CD8-positive, alpha-beta memory T cell (primary cell): ENCODE measurements at regions of chr18 and their contacts with region 1.

Region 1: DNA sequence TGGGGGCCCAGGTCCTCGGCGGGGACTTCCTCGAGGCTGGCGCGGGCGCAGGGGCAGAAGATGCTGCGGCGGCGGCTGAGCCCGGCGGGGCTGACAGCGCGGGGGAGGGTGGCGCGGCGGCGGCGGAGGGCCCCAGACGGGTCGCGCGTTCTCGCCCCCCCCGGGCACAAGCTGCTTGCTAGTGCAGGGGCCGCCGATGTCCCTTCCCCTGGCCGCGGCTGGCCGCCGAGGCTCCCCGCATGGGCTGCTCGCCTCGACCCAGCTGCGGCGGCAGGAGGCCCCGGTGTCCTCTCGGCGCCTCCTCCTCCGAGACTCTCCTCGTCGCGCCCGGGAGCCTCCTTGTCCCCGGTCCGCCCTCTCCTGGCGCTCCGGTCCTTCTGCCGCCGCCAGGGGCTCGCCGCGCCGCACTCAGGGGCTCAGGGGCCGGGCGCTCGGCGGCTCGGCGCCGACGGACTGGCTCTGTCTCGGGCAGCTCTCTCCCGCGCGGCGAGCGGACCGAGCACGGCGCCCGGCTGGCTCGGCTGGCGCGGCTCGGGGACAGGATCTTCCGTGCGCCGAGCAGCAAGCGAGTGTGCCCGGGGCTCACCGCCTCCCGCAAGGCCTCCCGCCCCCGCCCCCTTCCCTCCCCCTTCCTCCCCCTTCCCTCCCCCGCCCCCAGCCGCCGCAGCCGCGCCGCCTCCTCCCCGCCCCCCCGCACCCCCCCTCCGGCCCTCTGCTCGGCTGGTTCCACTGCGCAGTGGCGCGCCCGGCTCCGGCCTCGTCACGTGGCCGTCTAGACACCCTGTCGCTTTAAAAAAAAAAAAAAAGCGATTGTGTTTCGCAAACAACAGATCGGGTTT is 902 bp upstream of the SMAD7 start:
- DNase-seq: peak; percentile 71 to 92 (median 77)
- H3K4me3 ChIP-seq: peak overlapping the region; percentile 75
- H3K4me3 Mint-ChIP-seq: peak overlapping the region; percentile 91 to 99 (median 96)
- H3K27ac ChIP-seq: peak overlapping the region; percentile 92
- H3K27ac Mint-ChIP-seq: peak overlapping the region; percentile 98 to 100 (median 99)
- H3K4me1 ChIP-seq: peaks cover 32% of the 10 kb centered on the region
- H3K4me1 Mint-ChIP-seq: peaks cover 45 to 54% (median 53%) of the 10 kb centered on the region in 3 donors
- H3K27me3 ChIP-seq: no peaks in the 10 kb centered on the region
- H3K27me3 Mint-ChIP-seq: peaks cover 0 to 2% of the 10 kb centered on the region in 2 donors

Region 2: GRCh38 chr18:48813833-48814489 is 137.7 kb before region 1 on chr18:
- CTCF ChIA-PET with region 1: interaction called, 3 read pairs
- POLR2A ChIA-PET with region 1: interaction called, 10 read pairs
- DNase-seq: peak in 4 of 5 donors; percentile 45 to 90 (median 71)
- H3K4me3 ChIP-seq: peak overlapping the region; percentile 19
- H3K4me3 Mint-ChIP-seq: peak overlapping the region; percentile 18 to 78 (median 60)
- H3K27ac ChIP-seq: peak overlapping the region; percentile 98
- H3K27ac Mint-ChIP-seq: peak overlapping the region; percentile 90 to 99 (median 97)
- H3K4me1 ChIP-seq: peaks cover 34% of the 10 kb centered on the region
- H3K4me1 Mint-ChIP-seq: peaks cover 55 to 72% (median 60%) of the 10 kb centered on the region in 3 donors
- H3K27me3 ChIP-seq: no peaks in the 10 kb centered on the region
- H3K27me3 Mint-ChIP-seq: no peaks in the 10 kb centered on the region

Region 3: GRCh38 chr18:48928787-48929186 is 22.9 kb before region 1 on chr18:
- CTCF ChIA-PET with region 1: interaction called, 6 read pairs
- POLR2A ChIA-PET with region 1: interaction called, 15 read pairs
- DNase-seq: peak; percentile 70 to 90 (median 75)
- H3K4me3 ChIP-seq: peak overlapping the region; percentile 21
- H3K4me3 Mint-ChIP-seq: peak overlapping the region; percentile 31 to 90 (median 78)
- H3K27ac ChIP-seq: no peak overlapping the region
- H3K27ac Mint-ChIP-seq: peak overlapping the region; percentile 78 to 99 (median 96)
- H3K4me1 ChIP-seq: peaks cover 81% of the 10 kb centered on the region
- H3K4me1 Mint-ChIP-seq: peaks cover 86 to 98% (median 89%) of the 10 kb centered on the region in 3 donors
- H3K27me3 ChIP-seq: no peaks in the 10 kb centered on the region
- H3K27me3 Mint-ChIP-seq: peaks cover 0 to 7% of the 10 kb centered on the region in 2 donors

Region 4: DNA sequence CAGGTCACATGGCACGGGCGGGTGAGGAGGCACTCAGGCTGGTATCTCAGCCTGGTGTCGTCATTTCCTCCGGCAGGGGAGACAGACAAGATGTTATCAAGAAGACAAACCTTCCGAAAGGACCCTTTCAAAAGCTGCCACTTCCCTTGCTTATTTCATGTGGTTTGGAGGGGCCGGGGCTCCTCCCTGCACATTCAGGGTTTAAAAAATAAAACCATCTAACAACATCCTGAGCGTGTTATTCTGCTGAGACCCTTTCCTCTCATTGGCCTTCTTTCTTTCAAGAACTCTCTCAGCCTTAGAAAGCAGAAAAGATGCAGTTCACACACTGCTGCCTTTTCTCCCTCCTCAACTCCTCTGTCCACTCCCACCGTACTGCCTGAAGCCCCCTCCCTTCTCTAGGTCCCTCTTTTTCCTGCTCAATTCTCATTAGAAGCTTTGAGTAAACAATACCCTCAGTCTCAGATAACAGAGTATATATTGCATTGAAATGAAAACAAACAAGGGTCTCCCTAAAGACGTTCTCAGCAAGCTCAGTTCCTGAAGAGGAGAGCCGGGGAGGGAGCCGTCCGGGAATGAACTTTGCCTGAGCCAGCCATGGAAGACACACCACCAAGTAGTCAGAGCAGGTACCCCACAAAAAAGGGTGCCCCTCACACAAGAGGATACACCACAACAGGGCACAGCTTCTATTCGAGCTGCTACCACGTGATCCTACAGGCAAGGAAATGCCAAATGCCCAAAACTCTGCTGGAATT is 10.6 kb before region 1 on chr18:
- CTCF ChIA-PET with region 1: interaction called, 13 read pairs
- POLR2A ChIA-PET with region 1: interaction called, 27 read pairs
- DNase-seq: peak; percentile 88 to 97 (median 97)
- H3K4me3 ChIP-seq: peak overlapping the region; percentile 54
- H3K4me3 Mint-ChIP-seq: peak overlapping the region; percentile 73 to 91 (median 85)
- H3K27ac ChIP-seq: peak overlapping the region; percentile 27
- H3K27ac Mint-ChIP-seq: peak overlapping the region; percentile 88 to 100 (median 98)
- H3K4me1 ChIP-seq: peaks cover 93% of the 10 kb centered on the region
- H3K4me1 Mint-ChIP-seq: peaks cover 90 to 100% (median 96%) of the 10 kb centered on the region in 3 donors
- H3K27me3 ChIP-seq: no peaks in the 10 kb centered on the region
- H3K27me3 Mint-ChIP-seq: peaks cover 0 to 4% of the 10 kb centered on the region in 2 donors